Activated CD4-positive, alpha-beta T cell treated with anti-CD3 and anti-CD28 coated beads for 36 hours (primary cell): ENCODE measurements at regions of chr2 and their contacts with region 1.

Region 1: DNA sequence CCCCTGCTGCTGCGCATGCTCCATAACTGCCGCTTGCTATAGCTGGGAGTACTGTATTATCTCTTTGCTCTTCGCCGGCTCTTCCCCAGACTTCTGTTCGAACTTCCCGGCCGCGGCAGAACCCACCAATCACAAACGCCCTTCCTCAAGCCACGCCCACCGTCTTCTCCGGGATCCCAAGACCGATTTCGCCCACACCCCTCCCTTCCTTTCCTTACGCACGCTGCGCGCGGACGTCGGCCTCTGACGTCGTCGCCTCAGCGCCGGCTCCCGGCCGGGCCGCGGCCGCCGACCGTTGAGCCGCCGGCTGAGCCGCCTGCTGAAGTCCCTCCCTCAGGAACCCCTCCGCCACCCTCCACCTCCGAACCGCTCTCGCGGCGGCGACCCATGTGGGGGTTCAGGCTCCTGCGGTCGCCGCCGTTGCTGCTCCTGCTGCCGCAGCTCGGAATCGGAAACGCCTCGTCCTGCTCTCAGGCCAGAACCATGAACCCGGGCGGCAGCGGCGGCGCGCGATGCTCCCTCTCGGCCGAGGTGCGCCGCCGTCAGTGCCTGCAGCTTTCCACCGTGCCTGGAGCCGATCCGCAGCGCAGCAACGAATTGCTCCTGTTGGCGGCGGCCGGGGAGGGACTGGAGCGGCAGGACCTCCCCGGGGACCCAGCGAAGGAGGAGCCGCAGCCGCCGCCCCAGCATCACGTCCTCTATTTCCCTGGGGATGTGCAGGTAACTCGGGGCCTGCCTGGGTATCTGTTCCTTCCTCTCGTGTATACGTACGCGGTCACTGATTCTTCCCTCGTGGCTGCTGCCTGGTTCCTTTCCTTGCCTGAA is at the start of gene C2orf69:
- DNase-seq: peak; percentile 97
- ATAC-seq: peak; percentile 91
- H3K4me3 Mint-ChIP-seq: peak within 1 kb of the TSS; percentile 96
- H3K27ac Mint-ChIP-seq: peak within 1 kb of the TSS; percentile 89
- H3K4me1 Mint-ChIP-seq: peaks cover 21% of the 10 kb centered on the region
- H3K27me3 Mint-ChIP-seq: peaks cover 2% of the 10 kb centered on the region
- total RNA-seq, gene C2orf69: 12.4 to 15.3 TPM

Region 2: GRCh38 chr2:199850718-199851500 is 60.4 kb before region 1 on chr2 and contains the start of gene FTCDNL1:
- CTCF ChIA-PET with region 1: no interaction called
- POLR2A ChIA-PET with region 1: no interaction called
- intact Hi-C with region 1: loop called (anchors 1 to 2 kb)
- DNase-seq: peak; percentile 83
- ATAC-seq: peak; percentile 97
- H3K4me3 Mint-ChIP-seq: peak within 1 kb of the TSS; percentile 87
- H3K27ac Mint-ChIP-seq: peak within 1 kb of the TSS; percentile 93
- H3K4me1 Mint-ChIP-seq: peaks cover 6% of the 10 kb centered on the region
- H3K27me3 Mint-ChIP-seq: peaks cover 2% of the 10 kb centered on the region
- total RNA-seq, gene FTCDNL1: 3.8 to 4.3 TPM

Region 3: GRCh38 chr2:199955339-199956261 is 44.3 kb after region 1 on chr2 and contains the starts of genes MAIP1 and TYW5:
- CTCF ChIA-PET with region 1: interaction called, 3 read pairs
- POLR2A ChIA-PET with region 1: no interaction called
- intact Hi-C with region 1: loop called (anchors 1 kb)
- DNase-seq: peak; percentile 87
- ATAC-seq: peak; percentile 87
- H3K4me3 Mint-ChIP-seq: peak within 1 kb of the TSS; percentile 99
- H3K27ac Mint-ChIP-seq: peak within 1 kb of the TSS; percentile 95
- H3K4me1 Mint-ChIP-seq: peaks cover 50% of the 10 kb centered on the region
- H3K27me3 Mint-ChIP-seq: no peaks in the 10 kb centered on the region
- total RNA-seq, gene MAIP1: 26.1 to 27.5 TPM
- total RNA-seq, gene TYW5: 9.6 to 10.1 TPM

Region 4: DNA sequence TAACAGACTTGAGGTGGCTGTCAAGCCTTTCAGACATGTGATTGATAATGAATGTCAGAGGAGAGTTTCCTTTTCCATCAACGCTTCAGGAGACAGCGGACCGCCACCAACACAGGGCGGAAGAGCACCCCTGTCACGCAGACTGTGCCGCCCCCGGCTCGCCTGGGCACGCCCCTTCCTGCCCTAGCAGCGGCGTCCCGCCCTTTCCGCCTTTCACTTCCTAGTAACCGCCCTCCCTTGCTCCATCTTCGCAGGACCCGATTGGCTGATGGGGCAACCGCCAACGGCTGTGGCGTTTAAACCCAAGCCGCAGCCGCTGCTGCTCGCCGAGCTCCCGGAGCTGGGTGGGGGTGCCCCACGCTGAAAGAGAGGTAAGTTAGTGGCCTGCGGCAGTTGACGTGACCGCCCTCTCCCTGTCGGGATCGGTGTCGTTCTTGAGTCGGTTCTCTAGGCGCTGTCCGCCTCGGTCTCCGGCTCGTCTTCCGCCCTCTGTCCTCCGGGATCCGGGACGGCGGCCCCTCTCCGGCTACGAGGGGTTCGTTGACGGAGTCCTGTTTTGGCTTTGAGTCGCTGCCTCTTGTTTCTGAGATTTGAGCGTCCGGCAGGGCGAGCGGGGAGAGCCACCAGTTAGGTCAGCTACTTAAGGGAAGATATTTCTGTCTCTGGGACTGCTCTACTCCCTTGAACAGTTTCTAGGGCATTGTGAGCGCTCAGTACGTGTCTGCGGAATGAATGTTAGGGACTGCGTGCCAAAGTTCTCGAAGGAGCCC is 614.8 kb after region 1 on chr2 and contains the start of gene SGO2:
- CTCF ChIA-PET with region 1: no interaction called
- POLR2A ChIA-PET with region 1: no interaction called
- intact Hi-C with region 1: loop called in 1 of 2 experiments (anchors 1 kb)
- DNase-seq: peak; percentile 98
- ATAC-seq: peak; percentile 99
- H3K4me3 Mint-ChIP-seq: peak within 1 kb of the TSS; percentile 97
- H3K27ac Mint-ChIP-seq: peak within 1 kb of the TSS; percentile 90
- H3K4me1 Mint-ChIP-seq: peaks cover 23% of the 10 kb centered on the region
- H3K27me3 Mint-ChIP-seq: no peaks in the 10 kb centered on the region
- total RNA-seq, gene SGO2: 49.9 to 56.7 TPM